Activated naive CD4-positive, alpha-beta T cell treated with anti-CD3 and anti-CD28 coated beads for 36 hours (primary cell): ENCODE measurements at regions of chr13 and their contacts with region 1.

Region 1: GRCh38 chr13:85557691-85558467 is 241.3 kb downstream of the SLITRK6 start:
- DNase-seq: no peak
- H3K4me3 Mint-ChIP-seq: no peak overlapping the region
- H3K27ac Mint-ChIP-seq: no peak overlapping the region
- H3K4me1 Mint-ChIP-seq: no peaks in the 10 kb centered on the region
- H3K27me3 Mint-ChIP-seq: no peaks in the 10 kb centered on the region

Region 2: DNA sequence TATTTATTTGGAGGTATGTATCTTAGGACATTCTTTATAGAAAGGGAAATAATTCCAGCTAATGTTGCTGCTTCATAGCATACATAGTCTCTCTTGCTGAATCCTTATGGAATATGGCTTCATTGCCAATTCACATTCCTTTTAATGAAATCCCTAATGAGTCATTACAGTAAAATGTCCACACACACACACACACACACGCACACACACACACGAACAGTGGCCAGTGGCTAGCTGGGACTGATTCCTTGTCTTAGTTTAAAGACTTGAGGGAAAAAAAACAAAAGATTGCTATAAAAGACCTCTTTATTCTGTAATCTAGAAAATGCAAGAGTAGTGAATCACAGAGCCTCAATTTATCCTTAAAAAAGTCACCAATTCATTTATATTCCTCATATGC is 60.2 kb before region 1 on chr13:
- CTCF ChIA-PET with region 1: no interaction called
- intact Hi-C with region 1: loop called (anchors 10 kb)
- DNase-seq: no peak
- H3K4me3 Mint-ChIP-seq: no peak overlapping the region
- H3K27ac Mint-ChIP-seq: no peak overlapping the region
- H3K4me1 Mint-ChIP-seq: no peaks in the 10 kb centered on the region
- H3K27me3 Mint-ChIP-seq: no peaks in the 10 kb centered on the region